OCI-LY7 (cell line): ENCODE measurements at regions of chr22 and their contacts with region 1.

Region 1: GRCh38 chr22:17785185-17786184 is 11.2 kb upstream of the BID start:
- DNase-seq: peak; percentile 79
- H3K4me3 ChIP-seq: no peak overlapping the region
- H3K27ac ChIP-seq: peak overlapping the region; percentile 19
- H3K4me1 ChIP-seq: peaks cover 22% of the 10 kb centered on the region
- CTCF ChIP-seq: peak; percentile 82

Region 2: GRCh38 chr22:17797721-17798559 is 12.5 kb after region 1 on chr22:
- CTCF ChIA-PET with region 1: interaction called, 11 read pairs
- POLR2A ChIA-PET with region 1: interaction called, 4 read pairs
- intact Hi-C with region 1: no loop called
- DNase-seq: peak; percentile 86
- H3K4me3 ChIP-seq: peak overlapping the region; percentile 63
- H3K27ac ChIP-seq: peak overlapping the region; percentile 96
- H3K4me1 ChIP-seq: peaks cover 85% of the 10 kb centered on the region
- CTCF ChIP-seq: no peak

Region 3: DNA sequence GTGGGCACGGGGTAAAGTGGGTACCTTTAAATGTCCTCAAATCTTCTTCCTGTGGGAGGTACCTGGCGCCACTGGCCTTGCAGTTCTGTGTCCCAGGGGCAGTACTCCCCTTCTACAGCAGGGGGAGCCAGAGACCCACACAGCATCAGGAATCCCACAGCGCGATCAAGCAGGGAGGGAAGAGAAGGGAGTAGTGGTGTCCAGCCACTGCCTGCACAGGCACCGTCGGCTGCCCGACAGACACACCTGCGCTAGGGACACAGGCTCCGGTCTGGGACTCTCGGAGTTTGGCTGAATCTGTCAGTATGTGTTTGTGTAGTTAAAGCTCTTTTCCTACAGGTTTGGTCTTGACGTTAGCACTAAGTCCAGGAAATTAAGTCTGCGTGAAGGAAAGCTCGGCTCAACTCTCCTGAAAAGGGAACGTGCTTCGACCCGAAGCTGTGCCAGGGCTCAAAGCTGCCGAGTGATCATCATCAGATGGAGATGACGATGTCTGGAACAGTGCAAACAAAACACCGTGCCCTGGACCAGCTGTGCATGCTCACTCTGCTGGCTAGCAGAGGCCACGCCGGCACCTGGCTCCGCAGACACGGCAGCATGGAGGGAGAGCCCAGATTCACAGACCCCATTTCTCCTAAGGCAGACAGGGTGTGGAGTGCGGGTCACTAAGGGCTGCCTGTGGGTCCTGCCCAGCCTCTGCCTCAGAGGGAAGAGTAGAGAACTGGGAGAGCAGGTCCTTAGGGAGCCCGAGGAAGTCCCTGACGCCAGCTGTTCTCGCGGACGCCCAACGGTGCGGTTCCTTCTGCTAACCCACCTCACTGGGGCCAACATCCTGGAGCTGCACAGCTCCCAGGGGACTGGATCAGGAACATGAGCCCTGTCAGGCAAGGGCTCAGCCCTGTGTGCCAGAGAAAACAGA is 44.8 kb after region 1 on chr22:
- CTCF ChIA-PET with region 1: no interaction called
- POLR2A ChIA-PET with region 1: no interaction called
- intact Hi-C with region 1: no loop called
- DNase-seq: peak; percentile 80
- H3K4me3 ChIP-seq: no peak overlapping the region
- H3K27ac ChIP-seq: no peak overlapping the region
- H3K4me1 ChIP-seq: no peaks in the 10 kb centered on the region
- CTCF ChIP-seq: peak; percentile 94